ENCODE measurements at regions of chr20 and their contacts with region 1.

Region 1: GRCh38 chr20:37527638-37528441 is at the start of gene BLCAP:
- DNase-seq: peak; percentile 89 to 97 (median 92)
- ATAC-seq: peak; percentile 92
- H3K4me3 ChIP-seq: peak within 1 kb of the TSS; percentile 100
- H3K4me3 Mint-ChIP-seq: peak within 1 kb of the TSS; percentile 94
- H3K27ac ChIP-seq: peak within 1 kb of the TSS; percentile 99
- H3K27ac Mint-ChIP-seq: peak within 1 kb of the TSS; percentile 98
- H3K4me1 ChIP-seq: peaks cover 53% of the 10 kb centered on the region
- H3K4me1 Mint-ChIP-seq: peaks cover 52% of the 10 kb centered on the region
- H3K27me3 ChIP-seq: no peaks in the 10 kb centered on the region
- H3K27me3 Mint-ChIP-seq: no peaks in the 10 kb centered on the region
- CTCF ChIP-seq: no peak
- total RNA-seq, gene BLCAP: 59.4 to 60.1 TPM

Region 2: GRCh38 chr20:37178839-37179670 is 348.8 kb before region 1 on chr20 and contains the starts of genes MROH8 and RPN2:
- CTCF ChIA-PET with region 1: no interaction called
- POLR2A ChIA-PET with region 1: interaction called, 27 read pairs
- intact Hi-C with region 1: loop called in 1 of 2 experiments (anchors 2 kb)
- DNase-seq: peak; percentile 87 to 96 (median 93)
- ATAC-seq: peak; percentile 92
- H3K4me3 ChIP-seq: peak within 1 kb of the TSS; percentile 80
- H3K4me3 Mint-ChIP-seq: peak within 1 kb of the TSS; percentile 99
- H3K27ac ChIP-seq: peak within 1 kb of the TSS; percentile 84 to 90
- H3K27ac Mint-ChIP-seq: peak within 1 kb of the TSS; percentile 88
- H3K4me1 ChIP-seq: peaks cover 40% of the 10 kb centered on the region
- H3K4me1 Mint-ChIP-seq: peaks cover 46% of the 10 kb centered on the region
- H3K27me3 ChIP-seq: no peaks in the 10 kb centered on the region
- H3K27me3 Mint-ChIP-seq: no peaks in the 10 kb centered on the region
- CTCF ChIP-seq: no peak
- total RNA-seq, gene MROH8: 1.1 to 1.2 TPM
- total RNA-seq, gene RPN2: 62.8 to 65.8 TPM

Region 3: GRCh38 chr20:37288091-37288490 is 239.7 kb before region 1 on chr20:
- CTCF ChIA-PET with region 1: interaction called, 3 read pairs
- POLR2A ChIA-PET with region 1: interaction called, 11 read pairs
- intact Hi-C with region 1: loop called in 1 of 2 experiments (anchors 2 kb)
- DNase-seq: peak in 2 of 14 experiments; percentile 43 to 53
- ATAC-seq: no peak
- H3K4me3 ChIP-seq: no peak overlapping the region
- H3K4me3 Mint-ChIP-seq: peak overlapping the region; percentile 98
- H3K27ac ChIP-seq: no peak overlapping the region
- H3K27ac Mint-ChIP-seq: peak overlapping the region; percentile 96
- H3K4me1 ChIP-seq: peaks cover 24% of the 10 kb centered on the region
- H3K4me1 Mint-ChIP-seq: peaks cover 30% of the 10 kb centered on the region
- H3K27me3 ChIP-seq: no peaks in the 10 kb centered on the region
- H3K27me3 Mint-ChIP-seq: peaks cover 9% of the 10 kb centered on the region
- CTCF ChIP-seq: no peak

Region 4: GRCh38 chr20:37564388-37565133 is 36.7 kb after region 1 on chr20:
- CTCF ChIA-PET with region 1: no interaction called
- POLR2A ChIA-PET with region 1: no interaction called
- intact Hi-C with region 1: no loop called
- DNase-seq: peak in 13 of 14 experiments; percentile 3 to 64 (median 23)
- ATAC-seq: no peak
- H3K4me3 ChIP-seq: no peak overlapping the region
- H3K4me3 Mint-ChIP-seq: no peak overlapping the region
- H3K27ac ChIP-seq: no peak overlapping the region
- H3K27ac Mint-ChIP-seq: no peak overlapping the region
- H3K4me1 ChIP-seq: peaks cover 7% of the 10 kb centered on the region
- H3K4me1 Mint-ChIP-seq: peaks cover 4% of the 10 kb centered on the region
- H3K27me3 ChIP-seq: peaks cover 33 to 49% of the 10 kb centered on the region in 2 experiments
- H3K27me3 Mint-ChIP-seq: peaks cover 73% of the 10 kb centered on the region
- CTCF ChIP-seq: peak; percentile 71

Region 5: GRCh38 chr20:37796121-37796520 is 268.3 kb after region 1 on chr20:
- CTCF ChIA-PET with region 1: no interaction called
- POLR2A ChIA-PET with region 1: no interaction called
- intact Hi-C with region 1: no loop called
- DNase-seq: no peak
- ATAC-seq: no peak
- H3K4me3 ChIP-seq: no peak overlapping the region
- H3K4me3 Mint-ChIP-seq: no peak overlapping the region
- H3K27ac ChIP-seq: no peak overlapping the region
- H3K27ac Mint-ChIP-seq: no peak overlapping the region
- H3K4me1 ChIP-seq: no peaks in the 10 kb centered on the region
- H3K4me1 Mint-ChIP-seq: no peaks in the 10 kb centered on the region
- H3K27me3 ChIP-seq: no peaks in the 10 kb centered on the region
- H3K27me3 Mint-ChIP-seq: no peaks in the 10 kb centered on the region
- CTCF ChIP-seq: no peak

Measured in CD4-positive, alpha-beta T cell (primary cell).